ENCODE measurements at regions of chr1 and their contacts with region 1.

Region 1: GRCh38 chr1:52702886-52703787 is 5.0 kb upstream of the COA7 start:
- DNase-seq: peak; percentile 77
- ATAC-seq: peak; percentile 97
- H3K4me3 ChIP-seq: peak overlapping the region; percentile 49; the same call in 1 of the 2 replicates
- H3K27ac ChIP-seq: peak overlapping the region; percentile 51
- H3K4me1 ChIP-seq: peaks cover 6% of the 10 kb centered on the region; the same call in 1 of the 2 replicates
- H3K27me3 ChIP-seq: no peaks in the 10 kb centered on the region
- CTCF ChIP-seq: no peak
- EP300 ChIP-seq: no peak
- POLR2A ChIP-seq: peak; percentile 71
- RAD21 ChIP-seq: no peak

Region 2: GRCh38 chr1:52825868-52826267 is 122.7 kb after region 1 on chr1:
- CTCF ChIA-PET with region 1: interaction called, 11 read pairs
- POLR2A ChIA-PET with region 1: no interaction called
- RAD21 ChIA-PET with region 1: interaction called, 5 read pairs
- SMC1A ChIA-PET with region 1: interaction called, 4 read pairs
- in situ Hi-C with region 1: no loop called
- intact Hi-C with region 1: loop called (anchors 5 kb)
- DNase-seq: no peak
- ATAC-seq: peak; percentile 70
- H3K4me3 ChIP-seq: no peak overlapping the region
- H3K27ac ChIP-seq: no peak overlapping the region
- H3K4me1 ChIP-seq: no peaks in the 10 kb centered on the region
- H3K27me3 ChIP-seq: no peaks in the 10 kb centered on the region
- CTCF ChIP-seq: peak; percentile 18 to 42 (median 30); a peak in 4 of 6 replicates
- EP300 ChIP-seq: no peak
- POLR2A ChIP-seq: no peak
- RAD21 ChIP-seq: peak; percentile 35

Region 3: GRCh38 chr1:52842643-52843309 is 139.6 kb after region 1 on chr1 and contains the start of gene ZYG11A:
- CTCF ChIA-PET with region 1: interaction called, 4 read pairs
- POLR2A ChIA-PET with region 1: interaction called, 6 read pairs
- RAD21 ChIA-PET with region 1: no interaction called
- SMC1A ChIA-PET with region 1: no interaction called
- in situ Hi-C with region 1: no loop called
- intact Hi-C with region 1: loop called (anchors 5 kb)
- DNase-seq: no peak
- ATAC-seq: peak; percentile 94
- H3K4me3 ChIP-seq: peak within 1 kb of the TSS; percentile 78
- H3K27ac ChIP-seq: peak within 1 kb of the TSS; percentile 73
- H3K4me1 ChIP-seq: no peaks in the 10 kb centered on the region
- H3K27me3 ChIP-seq: no peaks in the 10 kb centered on the region
- CTCF ChIP-seq: peak; percentile 17 to 55 (median 29); a peak in 3 of 6 replicates
- EP300 ChIP-seq: no peak
- POLR2A ChIP-seq: peak; percentile 55; the same call in 1 of the 2 replicates
- RAD21 ChIP-seq: peak; percentile 20; the same call in 1 of the 2 replicates
- polyA plus RNA-seq, gene ZYG11A: 0.22 to 0.26 TPM

Region 4: DNA sequence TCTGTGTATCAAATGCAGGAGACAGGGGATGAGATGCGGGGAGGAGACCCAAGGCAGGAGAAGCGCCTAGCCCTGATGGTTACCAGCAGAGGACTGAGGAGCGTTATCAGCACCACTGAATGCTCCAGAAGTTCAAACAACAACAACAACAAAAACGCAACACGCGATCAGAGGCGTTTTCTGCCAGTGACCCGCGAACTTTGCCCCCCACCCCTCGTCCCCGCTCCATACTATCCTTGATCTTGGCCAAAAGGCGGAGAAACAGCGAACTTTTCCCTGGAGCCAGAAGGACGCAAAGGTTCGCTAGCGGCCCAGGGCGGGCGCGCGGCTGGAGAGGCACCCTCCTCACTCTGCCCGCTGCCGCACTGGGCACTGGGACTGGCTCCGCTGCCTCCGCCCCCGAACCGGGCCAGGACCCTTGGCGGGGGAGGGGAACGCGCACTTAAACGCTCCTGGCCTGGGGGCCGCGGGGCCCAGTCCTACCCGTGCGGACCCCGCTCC is 217.7 kb after region 1 on chr1:
- CTCF ChIA-PET with region 1: interaction called, 6 read pairs
- POLR2A ChIA-PET with region 1: no interaction called
- RAD21 ChIA-PET with region 1: interaction called, 8 read pairs
- SMC1A ChIA-PET with region 1: interaction called, 3 read pairs
- in situ Hi-C with region 1: no loop called
- intact Hi-C with region 1: loop called (anchors 5 kb)
- DNase-seq: no peak
- ATAC-seq: peak; percentile 3; the same call in 2 of the 3 replicates
- H3K4me3 ChIP-seq: peak overlapping the region; percentile 52
- H3K27ac ChIP-seq: no peak overlapping the region
- H3K4me1 ChIP-seq: no peaks in the 10 kb centered on the region
- H3K27me3 ChIP-seq: no peaks in the 10 kb centered on the region
- CTCF ChIP-seq: no peak
- EP300 ChIP-seq: no peak
- POLR2A ChIP-seq: no peak
- RAD21 ChIP-seq: no peak

Region 5: GRCh38 chr1:53182111-53182593 is 479.0 kb after region 1 on chr1:
- CTCF ChIA-PET with region 1: interaction called, 5 read pairs
- POLR2A ChIA-PET with region 1: interaction called, 7 read pairs
- RAD21 ChIA-PET with region 1: no interaction called
- SMC1A ChIA-PET with region 1: no interaction called
- in situ Hi-C with region 1: loop called (anchors 5 kb)
- intact Hi-C with region 1: loop called (anchors 1 kb)
- DNase-seq: peak; percentile 20
- ATAC-seq: peak; percentile 94
- H3K4me3 ChIP-seq: no peak overlapping the region
- H3K27ac ChIP-seq: no peak overlapping the region
- H3K4me1 ChIP-seq: no peaks in the 10 kb centered on the region
- H3K27me3 ChIP-seq: no peaks in the 10 kb centered on the region; a peak in 1 of 4 replicates
- CTCF ChIP-seq: peak; percentile 79 to 93 (median 81)
- EP300 ChIP-seq: no peak
- POLR2A ChIP-seq: no peak
- RAD21 ChIP-seq: peak; percentile 62

Region 6: DNA sequence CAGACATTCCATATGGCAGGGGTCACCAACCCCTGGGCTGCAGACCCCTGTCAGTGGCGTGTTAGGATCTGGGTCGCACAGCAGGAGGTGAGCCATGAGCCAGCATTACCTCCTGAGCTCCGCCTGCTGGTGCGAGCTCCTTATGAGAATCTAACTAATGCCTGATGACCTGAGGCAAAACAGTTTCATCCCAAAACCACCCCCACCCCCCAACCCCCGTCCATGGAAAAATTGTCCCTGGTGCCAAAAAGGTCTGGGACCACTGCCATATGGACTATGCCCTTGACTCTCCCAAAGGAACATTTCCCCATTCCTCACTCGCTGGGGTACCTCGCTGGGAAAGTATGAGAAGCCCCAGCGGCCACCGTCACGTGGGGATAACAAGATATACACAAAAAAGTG is 487.1 kb after region 1 on chr1:
- CTCF ChIA-PET with region 1: no interaction called
- POLR2A ChIA-PET with region 1: no interaction called
- RAD21 ChIA-PET with region 1: no interaction called
- SMC1A ChIA-PET with region 1: no interaction called
- in situ Hi-C with region 1: loop called (anchors 5 kb)
- intact Hi-C with region 1: no loop called
- DNase-seq: no peak
- ATAC-seq: no peak
- H3K4me3 ChIP-seq: no peak overlapping the region
- H3K27ac ChIP-seq: no peak overlapping the region
- H3K4me1 ChIP-seq: no peaks in the 10 kb centered on the region
- H3K27me3 ChIP-seq: no peaks in the 10 kb centered on the region; a peak in 1 of 4 replicates
- CTCF ChIP-seq: no peak
- EP300 ChIP-seq: no peak
- POLR2A ChIP-seq: no peak
- RAD21 ChIP-seq: no peak